Endothelial cell of umbilical vein (primary cell): ENCODE measurements at regions of chrX and their contacts with region 1.

Region 1: DNA sequence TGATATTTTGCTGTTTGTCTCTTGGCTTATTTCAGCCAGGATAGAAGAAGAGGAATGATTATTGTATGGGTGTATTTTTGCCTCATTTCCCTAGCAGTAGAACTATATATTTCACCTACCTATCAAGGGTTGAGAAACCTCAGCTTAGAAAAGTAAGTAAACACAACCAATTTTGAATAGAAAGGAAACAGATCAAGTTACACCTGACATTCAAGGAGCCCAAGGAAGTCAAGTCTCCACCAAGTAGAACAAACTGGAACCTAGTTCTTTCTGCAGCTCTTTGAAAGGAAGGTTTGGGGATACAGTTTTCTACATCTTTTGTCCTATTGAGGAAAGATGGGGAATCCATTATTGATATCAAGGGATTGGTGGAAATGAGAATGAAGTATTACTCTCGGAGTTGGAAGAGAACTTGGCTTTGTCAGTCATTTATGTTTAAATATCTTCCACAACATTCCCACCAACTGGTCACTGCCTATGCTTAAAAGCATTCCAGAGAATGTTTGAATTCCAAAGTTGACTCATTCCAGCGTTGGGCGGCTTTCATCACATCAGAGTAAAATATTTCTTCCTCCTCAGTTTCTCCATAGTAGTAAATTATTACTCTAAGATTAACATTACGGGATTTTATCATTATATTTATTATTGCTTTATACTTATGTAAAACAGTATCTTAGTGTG is 207.8 kb upstream of the CNKSR2 start:
- DNase-seq: no peak
- H3K4me3 ChIP-seq: no peak overlapping the region
- H3K27ac ChIP-seq: no peak overlapping the region
- H3K4me1 ChIP-seq: no peaks in the 10 kb centered on the region
- H3K27me3 ChIP-seq: no peaks in the 10 kb centered on the region
- CTCF ChIP-seq: no peak
- POLR2A ChIP-seq: no peak

Region 2: DNA sequence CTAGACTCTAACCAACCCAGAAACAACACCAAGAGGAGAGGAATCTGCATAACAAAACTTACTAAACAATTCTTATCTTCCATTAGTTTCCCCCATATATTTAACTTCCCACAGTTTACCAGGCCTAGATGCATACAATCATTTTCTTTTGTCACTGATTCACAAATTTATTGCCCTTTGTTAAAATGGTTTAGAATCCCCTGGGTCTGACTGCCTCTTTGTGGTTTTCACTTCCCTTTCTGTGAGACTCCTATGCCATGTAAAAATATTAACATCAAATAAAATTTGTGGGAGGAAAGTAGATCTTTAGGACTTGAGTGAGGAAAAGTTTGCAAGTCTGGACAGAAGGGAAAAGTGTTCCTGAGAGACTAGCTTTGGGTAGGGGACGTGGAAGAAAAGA is 186.0 kb before region 1 on chrX:
- CTCF ChIA-PET with region 1: no interaction called
- POLR2A ChIA-PET with region 1: no interaction called
- dilution Hi-C with region 1: no loop called
- intact Hi-C with region 1: loop called (anchors 5 kb)
- DNase-seq: no peak
- H3K4me3 ChIP-seq: no peak overlapping the region
- H3K27ac ChIP-seq: no peak overlapping the region
- H3K4me1 ChIP-seq: no peaks in the 10 kb centered on the region
- H3K27me3 ChIP-seq: no peaks in the 10 kb centered on the region
- CTCF ChIP-seq: no peak
- POLR2A ChIP-seq: no peak